ENCODE measurements at regions of chr15 and their contacts with region 1.

Region 1: GRCh38 chr15:75817138-75817935 is 25.9 kb upstream of the UBE2Q2 start:
- DNase-seq: peak; percentile 15
- H3K4me3 Mint-ChIP-seq: peak overlapping the region; percentile 74
- H3K27ac Mint-ChIP-seq: peak overlapping the region; percentile 82
- H3K4me1 Mint-ChIP-seq: peaks cover 22% of the 10 kb centered on the region
- H3K27me3 Mint-ChIP-seq: no peaks in the 10 kb centered on the region

Region 2: GRCh38 chr15:75790631-75791336 is 26.6 kb before region 1 on chr15:
- intact Hi-C with region 1: loop called (anchors 1 kb)
- DNase-seq: no peak
- H3K4me3 Mint-ChIP-seq: no peak overlapping the region
- H3K27ac Mint-ChIP-seq: no peak overlapping the region
- H3K4me1 Mint-ChIP-seq: no peaks in the 10 kb centered on the region
- H3K27me3 Mint-ChIP-seq: peaks cover 31% of the 10 kb centered on the region

Region 3: GRCh38 chr15:75843802-75844581 is 26.7 kb after region 1 on chr15:
- intact Hi-C with region 1: no loop called
- DNase-seq: peak; percentile 49
- H3K4me3 Mint-ChIP-seq: peak overlapping the region; percentile 99
- H3K27ac Mint-ChIP-seq: peak overlapping the region; percentile 93
- H3K4me1 Mint-ChIP-seq: peaks cover 61% of the 10 kb centered on the region
- H3K27me3 Mint-ChIP-seq: peaks cover 13% of the 10 kb centered on the region